CD4-positive, alpha-beta memory T cell (primary cell): ENCODE measurements at regions of chr16 and their contacts with region 1.

Region 1: GRCh38 chr16:67667817-67668494 is 1.3 kb downstream of the C16orf86 start:
- DNase-seq: peak; percentile 78 to 90 (median 82)
- H3K4me3 ChIP-seq: peak overlapping the region in 1 of 2 donors; percentile 89
- H3K4me3 Mint-ChIP-seq: peak overlapping the region; percentile 40 to 92 (median 63)
- H3K27ac ChIP-seq: peak overlapping the region; percentile 64
- H3K27ac Mint-ChIP-seq: peak overlapping the region in 6 of 7 donors; percentile 41 to 75 (median 62)
- H3K4me1 ChIP-seq: peaks cover 24% of the 10 kb centered on the region
- H3K4me1 Mint-ChIP-seq: peaks cover 8 to 49% (median 15%) of the 10 kb centered on the region in 4 donors
- H3K27me3 ChIP-seq: no peaks in the 10 kb centered on the region
- H3K27me3 Mint-ChIP-seq: no peaks in the 10 kb centered on the region

Region 2: DNA sequence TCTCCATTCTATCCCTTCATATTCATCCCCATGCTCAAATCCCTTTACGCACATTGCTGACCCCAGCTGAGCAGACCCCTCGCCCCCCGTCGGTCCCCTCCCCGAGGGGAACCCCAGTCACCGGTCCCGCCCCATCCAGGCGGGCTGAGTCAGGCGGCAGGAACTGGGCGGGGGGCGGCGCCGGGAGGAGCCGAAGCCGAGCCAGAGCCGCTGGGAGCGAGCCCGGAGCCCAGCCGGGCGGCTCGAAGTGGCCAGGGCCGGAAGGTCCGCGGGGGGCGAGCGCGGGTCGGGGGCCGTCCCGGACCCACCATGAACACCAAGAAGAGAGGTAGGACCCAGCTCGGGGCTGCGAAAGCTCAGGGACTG is 130.7 kb before region 1 on chr16:
- CTCF ChIA-PET with region 1: interaction called, 8 read pairs
- POLR2A ChIA-PET with region 1: interaction called, 17 read pairs
- intact Hi-C with region 1: no loop called
- DNase-seq: peak in 3 of 5 donors; percentile 37 to 66 (median 38)
- H3K4me3 ChIP-seq: peak overlapping the region; percentile 42 to 72
- H3K4me3 Mint-ChIP-seq: peak overlapping the region; percentile 81 to 92 (median 86)
- H3K27ac ChIP-seq: peak overlapping the region; percentile 84
- H3K27ac Mint-ChIP-seq: peak overlapping the region; percentile 90 to 93 (median 92)
- H3K4me1 ChIP-seq: peaks cover 26% of the 10 kb centered on the region
- H3K4me1 Mint-ChIP-seq: peaks cover 18 to 60% (median 34%) of the 10 kb centered on the region in 4 donors
- H3K27me3 ChIP-seq: no peaks in the 10 kb centered on the region
- H3K27me3 Mint-ChIP-seq: no peaks in the 10 kb centered on the region

Region 3: DNA sequence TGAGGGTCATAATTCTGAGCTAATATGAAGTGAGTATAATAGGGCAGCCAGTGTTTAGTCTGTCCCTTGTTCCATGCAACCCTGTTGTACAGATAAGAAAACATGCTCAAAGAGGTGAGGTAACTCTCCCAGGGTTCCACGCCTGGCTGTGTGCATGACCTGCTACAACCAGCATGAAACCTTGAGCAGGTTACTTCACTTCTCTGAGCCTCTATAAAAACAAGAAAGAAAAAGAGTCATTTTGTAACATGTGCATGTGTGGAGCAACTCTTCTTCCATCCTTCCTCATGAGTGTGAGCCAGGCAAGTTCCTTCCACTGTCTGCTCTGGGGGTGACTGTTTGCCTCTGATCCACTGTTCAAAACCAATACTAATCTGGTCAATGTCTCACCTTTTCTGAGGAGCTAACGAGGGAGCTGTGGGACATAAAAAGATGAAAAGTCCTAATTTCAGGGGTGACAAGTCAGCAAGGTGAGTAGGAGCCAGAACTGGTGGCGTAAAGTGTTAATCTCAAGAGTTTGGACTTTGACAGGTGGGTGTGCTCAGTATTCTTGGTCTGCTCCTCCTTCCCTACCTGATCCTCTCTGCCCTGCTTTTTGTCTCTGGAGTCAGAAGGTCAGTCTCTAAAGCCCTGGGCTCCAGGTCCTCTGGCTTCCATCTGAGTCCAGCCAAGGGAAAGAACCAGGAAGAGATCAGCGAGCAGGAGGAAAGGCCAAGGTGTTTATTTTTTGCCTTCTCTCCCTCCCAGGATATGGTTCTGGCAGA is 29.6 kb after region 1 on chr16:
- CTCF ChIA-PET with region 1: no interaction called
- POLR2A ChIA-PET with region 1: no interaction called
- intact Hi-C with region 1: no loop called
- DNase-seq: no peak
- H3K4me3 ChIP-seq: no peak overlapping the region
- H3K4me3 Mint-ChIP-seq: no peak overlapping the region
- H3K27ac ChIP-seq: no peak overlapping the region
- H3K27ac Mint-ChIP-seq: peak overlapping the region in 1 of 7 donors; percentile 22
- H3K4me1 ChIP-seq: peaks cover 1% of the 10 kb centered on the region
- H3K4me1 Mint-ChIP-seq: peaks cover 5 to 10% (median 6%) of the 10 kb centered on the region in 4 donors
- H3K27me3 ChIP-seq: no peaks in the 10 kb centered on the region
- H3K27me3 Mint-ChIP-seq: no peaks in the 10 kb centered on the region

Region 4: DNA sequence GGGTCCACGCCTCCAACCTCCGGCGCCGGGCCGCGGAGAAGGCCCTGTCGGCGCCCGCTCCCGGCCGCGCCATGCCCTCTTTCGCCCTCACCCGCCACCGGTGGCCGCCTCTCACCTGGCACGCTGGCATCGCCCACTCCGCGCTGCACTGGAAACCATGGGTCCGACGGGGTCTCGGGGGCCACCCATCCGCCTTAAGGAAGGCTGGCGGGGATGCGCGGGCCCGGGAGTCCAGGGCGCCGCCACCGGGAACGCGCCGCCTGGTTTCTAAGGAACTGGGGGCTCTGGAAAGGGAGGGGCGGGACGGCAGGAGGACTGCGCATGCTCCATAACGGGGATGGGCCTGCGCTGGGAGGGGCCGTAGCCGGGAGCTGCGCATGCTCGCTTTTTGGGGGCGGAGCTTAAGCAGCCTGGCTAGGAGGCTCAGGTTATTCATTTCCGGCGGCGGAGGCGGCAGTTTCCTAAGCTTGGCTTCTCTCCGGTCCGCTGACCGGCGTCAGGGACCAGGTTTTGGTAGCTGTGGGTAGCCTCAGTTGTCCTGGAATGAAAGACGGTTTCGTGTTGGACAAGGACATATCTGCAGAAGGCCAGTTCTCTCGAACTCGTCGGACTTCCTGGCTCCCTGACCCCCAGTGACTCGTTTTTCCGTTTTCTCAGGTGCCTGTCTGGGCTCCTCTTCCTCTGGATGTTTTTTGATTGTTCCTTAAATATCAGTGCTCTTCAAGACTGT is 51.3 kb after region 1 on chr16 and contains the start of gene GFOD2:
- CTCF ChIA-PET with region 1: interaction called, 25 read pairs
- POLR2A ChIA-PET with region 1: interaction called, 6 read pairs
- intact Hi-C with region 1: loop called (anchors 5 kb)
- DNase-seq: peak; percentile 95 to 99 (median 96)
- H3K4me3 ChIP-seq: peak within 1 kb of the TSS; percentile 69 to 81
- H3K4me3 Mint-ChIP-seq: peak within 1 kb of the TSS; percentile 94 to 99 (median 97)
- H3K27ac ChIP-seq: peak within 1 kb of the TSS; percentile 83
- H3K27ac Mint-ChIP-seq: peak within 1 kb of the TSS; percentile 89 to 100 (median 98)
- H3K4me1 ChIP-seq: peaks cover 27% of the 10 kb centered on the region
- H3K4me1 Mint-ChIP-seq: peaks cover 29 to 50% (median 40%) of the 10 kb centered on the region in 4 donors
- H3K27me3 ChIP-seq: no peaks in the 10 kb centered on the region
- H3K27me3 Mint-ChIP-seq: no peaks in the 10 kb centered on the region
- total RNA-seq, gene GFOD2: 18.0 to 19.8 TPM